Common myeloid progenitor, CD34-positive (primary cell): ENCODE measurements at regions of chr6 and their contacts with region 1.

Region 1: DNA sequence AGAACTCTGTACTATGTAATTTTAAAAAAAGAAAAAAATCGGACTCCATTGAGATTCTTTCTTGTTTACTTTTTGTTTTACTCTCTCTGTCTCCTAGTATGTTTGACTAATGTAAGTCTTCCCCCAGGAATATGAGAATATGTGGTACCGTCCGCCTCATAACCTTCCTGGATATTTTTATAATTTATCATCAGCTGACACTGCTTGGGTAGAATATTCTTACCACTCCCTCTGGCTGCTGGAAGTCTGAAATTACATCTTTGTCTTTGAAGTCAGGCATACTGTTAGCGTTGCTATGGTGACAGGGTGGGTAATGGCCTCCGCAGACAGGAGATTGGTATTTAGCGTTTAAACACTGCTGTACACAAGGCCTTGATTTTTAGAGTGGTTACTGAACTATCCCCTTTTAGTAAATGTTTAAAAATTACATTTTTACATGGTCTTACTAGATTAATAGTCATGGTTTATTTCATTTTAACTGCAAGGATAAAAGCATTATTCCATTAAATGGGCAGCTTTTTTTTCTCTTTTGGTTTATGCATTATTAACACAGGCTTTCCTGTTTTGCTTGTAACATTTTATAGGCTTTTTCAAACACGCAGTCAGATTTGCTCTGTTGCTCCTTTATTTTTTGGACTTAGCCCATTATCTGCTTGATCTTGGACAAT is 176.4 kb downstream of the ARID1B start:
- DNase-seq: peak; percentile 80 to 86 (median 81)
- H3K4me3 ChIP-seq: no peak overlapping the region
- H3K27ac ChIP-seq: peak overlapping the region; percentile 26 to 60
- H3K4me1 ChIP-seq: peaks cover 27 to 53% (median 35%) of the 10 kb centered on the region in 4 experiments
- H3K27me3 ChIP-seq: no peaks in the 10 kb centered on the region

Region 2: DNA sequence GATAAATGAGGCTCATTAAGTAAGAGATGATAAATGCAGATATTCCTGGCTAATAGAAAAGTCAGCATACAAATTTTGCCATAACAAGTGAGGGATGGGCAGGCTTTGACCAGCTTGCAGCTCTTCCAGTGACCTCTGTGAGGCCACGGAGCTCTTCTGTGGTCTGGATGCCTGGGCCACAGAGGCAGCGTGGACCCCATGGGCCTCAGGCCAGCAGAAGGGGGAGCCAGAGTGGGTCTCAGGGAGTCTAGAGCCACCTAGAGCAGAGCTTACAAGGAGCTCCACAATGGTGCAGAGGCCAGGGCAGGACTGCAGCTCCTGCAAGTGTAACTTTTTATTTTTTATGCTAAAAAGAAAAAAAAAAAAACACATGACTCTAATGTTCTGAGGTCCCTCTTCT is 11.3 kb before region 1 on chr6:
- CTCF ChIA-PET with region 1: interaction called, 29 read pairs
- POLR2A ChIA-PET with region 1: no interaction called
- DNase-seq: peak in 2 of 3 donors; percentile 17 to 37
- H3K4me3 ChIP-seq: no peak overlapping the region
- H3K27ac ChIP-seq: peak overlapping the region in 1 of 2 experiments; percentile 25
- H3K4me1 ChIP-seq: peaks cover 0 to 23% (median 3%) of the 10 kb centered on the region in 4 experiments
- H3K27me3 ChIP-seq: no peaks in the 10 kb centered on the region

Region 3: DNA sequence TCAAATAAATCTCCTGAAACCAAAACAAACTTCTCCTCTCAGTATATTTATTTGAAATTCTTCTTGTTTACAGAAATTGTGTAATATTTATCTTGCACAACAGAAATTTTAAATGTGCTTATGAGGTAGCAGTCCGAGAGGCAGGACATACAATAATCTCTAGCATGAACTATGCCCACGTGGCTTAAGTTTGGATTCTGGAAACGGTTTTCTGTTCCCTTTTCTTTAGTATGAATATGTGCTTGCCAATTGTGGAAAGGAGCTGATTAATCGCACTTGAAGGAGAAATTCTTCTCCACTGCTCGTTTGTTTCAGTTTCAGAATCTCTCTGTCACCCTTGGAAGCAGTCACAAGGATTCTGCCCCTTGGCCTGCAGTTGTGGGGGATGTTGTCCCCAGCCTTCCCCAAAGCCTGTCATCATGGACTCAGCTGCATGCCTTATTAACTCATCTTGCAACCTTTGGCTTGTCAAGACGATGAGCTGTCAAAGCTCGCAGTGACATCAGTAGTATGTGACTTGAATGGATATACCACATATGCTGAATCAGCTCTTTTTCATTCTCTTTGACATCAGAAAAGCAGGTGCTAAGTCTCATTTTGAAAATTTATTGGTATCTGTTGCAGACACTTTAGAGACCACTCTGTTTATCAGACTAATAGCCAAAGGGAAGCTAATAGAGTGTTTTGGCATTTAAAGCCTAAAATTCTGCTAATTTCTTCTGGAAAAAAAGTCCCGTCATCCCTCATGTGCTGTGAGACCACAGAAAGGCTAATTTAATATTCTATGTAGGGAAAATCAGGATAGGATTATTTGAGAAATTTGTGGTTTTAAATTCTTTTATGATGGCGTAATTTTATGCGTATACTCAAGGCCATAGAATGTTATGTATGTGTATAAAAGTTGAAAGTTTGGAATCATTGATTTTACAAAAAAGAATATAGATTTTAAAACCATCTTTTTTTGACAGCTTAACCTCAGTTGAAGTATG is 10.4 kb after region 1 on chr6:
- CTCF ChIA-PET with region 1: interaction called, 10 read pairs
- POLR2A ChIA-PET with region 1: interaction called, 3 read pairs
- DNase-seq: peak; percentile 36 to 80 (median 59)
- H3K4me3 ChIP-seq: peak overlapping the region in 2 of 7 experiments; percentile 15 to 29
- H3K27ac ChIP-seq: no peak overlapping the region
- H3K4me1 ChIP-seq: peaks cover 0 to 9% (median 2%) of the 10 kb centered on the region in 4 experiments
- H3K27me3 ChIP-seq: no peaks in the 10 kb centered on the region